ENCODE measurements at regions of chr3 and their contacts with region 1.

Region 1: DNA sequence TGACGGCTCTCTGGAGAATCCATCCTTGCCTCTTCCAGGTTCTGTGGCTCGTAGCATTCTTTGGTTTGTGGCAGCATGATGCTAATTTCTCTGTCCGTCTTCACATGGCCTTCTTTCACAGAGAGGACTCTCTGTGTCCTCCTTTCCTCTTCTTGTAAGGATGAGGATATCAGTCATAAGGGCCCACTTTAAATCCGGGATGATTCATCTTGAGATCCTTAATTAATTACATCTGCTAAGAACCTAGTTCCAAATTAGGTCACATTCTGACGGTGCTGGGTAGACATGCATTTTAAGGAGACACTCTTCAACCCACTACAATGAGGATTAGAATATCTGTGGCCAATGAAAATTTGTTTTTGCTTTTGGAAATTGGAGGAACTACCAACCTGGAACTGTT is 15.7 kb upstream of the GXYLT2 start:
- DNase-seq: peak; percentile 55
- ATAC-seq: no peak
- H3K4me3 ChIP-seq: no peak overlapping the region
- H3K27ac ChIP-seq: no peak overlapping the region
- H3K4me1 ChIP-seq: no peaks in the 10 kb centered on the region
- H3K27me3 ChIP-seq: peaks cover 2% of the 10 kb centered on the region; the same call in 1 of the 2 replicates
- CTCF ChIP-seq: no peak
- POLR2A ChIP-seq: no peak
- RAD21 ChIP-seq: no peak

Region 2: GRCh38 chr3:72797773-72798543 is 74.2 kb before region 1 on chr3:
- CTCF ChIA-PET with region 1: no interaction called
- POLR2A ChIA-PET with region 1: no interaction called
- dilution Hi-C with region 1: no loop called
- in situ Hi-C with region 1: no loop called
- intact Hi-C with region 1: no loop called
- DNase-seq: peak; percentile 41
- ATAC-seq: peak; percentile 37; the same call in 1 of the 2 replicates
- H3K4me3 ChIP-seq: no peak overlapping the region
- H3K27ac ChIP-seq: no peak overlapping the region
- H3K4me1 ChIP-seq: no peaks in the 10 kb centered on the region
- H3K27me3 ChIP-seq: no peaks in the 10 kb centered on the region
- CTCF ChIP-seq: no peak
- POLR2A ChIP-seq: no peak
- RAD21 ChIP-seq: no peak

Region 3: DNA sequence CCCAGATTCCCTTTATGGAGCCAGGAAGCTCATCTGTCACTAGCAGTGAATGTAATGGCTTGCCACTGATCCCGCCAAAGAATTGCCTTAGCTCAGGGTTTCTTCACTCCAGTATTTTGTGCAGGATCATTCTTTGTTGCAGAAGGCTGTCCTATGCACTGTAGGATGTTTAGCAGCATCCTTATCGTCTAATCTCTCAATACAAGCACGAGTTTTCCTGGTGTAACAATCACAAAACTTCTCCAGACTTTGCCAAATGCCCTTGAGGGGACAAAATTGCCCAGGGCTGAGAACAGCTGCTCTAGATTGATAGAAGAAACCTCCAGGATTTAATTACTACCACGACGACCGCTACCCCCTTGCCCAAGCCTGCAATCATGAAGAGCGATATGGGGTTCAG is 17.2 kb before region 1 on chr3:
- CTCF ChIA-PET with region 1: interaction called, 5 read pairs
- POLR2A ChIA-PET with region 1: no interaction called
- dilution Hi-C with region 1: no loop called
- in situ Hi-C with region 1: no loop called
- intact Hi-C with region 1: loop called (anchors 1 kb)
- DNase-seq: no peak
- ATAC-seq: no peak
- H3K4me3 ChIP-seq: no peak overlapping the region
- H3K27ac ChIP-seq: no peak overlapping the region
- H3K4me1 ChIP-seq: no peaks in the 10 kb centered on the region
- H3K27me3 ChIP-seq: peaks cover 2% of the 10 kb centered on the region; the same call in 1 of the 2 replicates
- CTCF ChIP-seq: no peak
- POLR2A ChIP-seq: no peak
- RAD21 ChIP-seq: no peak

Measured in IMR-90 (cell line).